ENCODE measurements at regions of chr5 and their contacts with region 1.

Region 1: GRCh38 chr5:134004592-134005375 is at the start of gene VDAC1:
- DNase-seq: peak; percentile 88
- total RNA-seq, gene VDAC1: 429 TPM

Region 2: DNA sequence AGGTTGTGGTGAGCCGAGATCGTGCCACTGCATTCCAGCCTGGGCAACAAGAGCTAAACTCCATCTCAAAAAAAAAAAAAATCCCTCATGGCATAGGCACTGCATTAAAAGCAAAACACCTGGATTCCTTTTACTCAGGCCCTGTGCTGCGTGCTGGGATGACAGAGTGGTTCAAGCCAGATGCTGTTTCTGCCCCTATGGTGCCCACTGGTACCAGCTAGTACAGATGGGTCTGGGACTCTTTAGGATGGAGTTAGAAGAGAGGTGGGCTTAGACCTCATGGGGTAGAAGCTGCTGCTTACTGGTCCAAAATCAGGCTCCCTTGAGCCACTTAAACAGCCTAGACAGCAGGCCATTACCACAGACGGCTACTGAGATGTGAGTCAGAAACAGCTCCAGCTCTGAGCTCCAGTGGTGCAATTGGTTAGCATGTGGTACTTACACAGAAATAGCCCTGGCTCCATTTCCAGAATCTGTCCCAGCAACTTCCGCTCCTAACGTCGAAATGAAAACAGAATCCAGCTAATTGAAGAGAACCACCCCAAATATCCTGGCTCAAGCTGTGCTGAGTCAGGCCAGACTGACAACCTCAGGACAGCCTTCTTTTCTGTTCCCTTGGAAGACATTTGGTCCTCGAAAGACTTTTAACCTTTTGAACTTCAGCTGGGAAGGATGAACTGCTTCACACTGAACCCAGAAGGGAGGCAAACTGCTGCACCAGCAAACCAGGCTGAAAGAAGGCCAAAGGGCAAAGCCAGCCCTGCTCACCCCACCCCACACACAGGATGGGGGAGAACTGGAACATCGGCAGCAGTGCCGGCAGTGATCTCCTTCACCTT is 51.8 kb before region 1 on chr5:
- intact Hi-C with region 1: loop called (anchors 5 kb)
- DNase-seq: peak; percentile 79

Region 3: DNA sequence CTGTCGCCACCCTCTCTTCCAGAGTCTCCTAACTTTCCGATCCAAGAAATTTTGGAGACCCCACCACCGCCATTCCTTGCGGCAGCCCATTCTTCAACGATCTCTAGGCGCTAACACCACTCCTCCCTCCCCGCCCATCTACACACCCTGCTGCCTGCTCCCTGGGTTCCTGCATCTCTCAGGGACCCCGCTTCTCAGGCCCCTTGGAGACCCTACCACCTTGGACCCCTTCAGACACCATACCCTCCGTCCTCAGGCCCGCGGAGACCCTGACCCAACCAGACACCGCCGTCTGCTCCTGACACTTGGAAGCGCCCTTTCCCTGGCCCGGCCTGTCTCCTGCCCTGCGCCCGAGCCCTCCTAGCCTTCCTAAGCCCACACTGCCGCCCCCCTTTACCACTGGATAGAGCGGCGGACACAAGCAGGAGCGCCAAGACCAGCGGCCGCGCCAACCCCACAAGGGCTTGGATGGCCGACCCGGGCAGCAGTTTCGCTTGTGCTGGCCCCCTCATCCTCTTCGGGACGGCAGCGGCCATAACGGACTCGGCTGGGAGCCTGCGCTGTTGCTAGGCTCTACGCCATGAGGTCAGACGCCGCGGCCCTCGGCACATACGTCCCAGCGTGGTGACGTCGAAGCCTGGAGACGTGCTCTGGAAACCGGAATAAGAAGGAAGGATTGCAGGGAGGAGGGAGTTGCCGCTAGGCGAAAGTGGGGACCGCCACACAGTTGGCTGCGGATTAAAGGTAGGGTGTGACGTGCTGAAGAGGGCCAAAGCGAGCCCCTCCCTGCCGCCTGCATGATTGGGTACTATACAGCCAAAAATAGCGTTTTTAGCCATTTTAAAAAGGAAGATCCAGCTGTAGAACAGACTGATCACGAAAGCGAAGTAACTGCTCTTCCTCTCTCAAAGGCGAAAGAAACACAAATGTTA is 36.5 kb before region 1 on chr5 and contains the start of gene C5orf15:
- intact Hi-C with region 1: loop called (anchors 1 kb)
- DNase-seq: peak; percentile 98
- total RNA-seq, gene C5orf15: 22.5 TPM

Measured in cardiac septum (tissue), 1 donor.